Calu3 (cell line): ENCODE measurements at regions of chr6 and their contacts with region 1.

Region 1: DNA sequence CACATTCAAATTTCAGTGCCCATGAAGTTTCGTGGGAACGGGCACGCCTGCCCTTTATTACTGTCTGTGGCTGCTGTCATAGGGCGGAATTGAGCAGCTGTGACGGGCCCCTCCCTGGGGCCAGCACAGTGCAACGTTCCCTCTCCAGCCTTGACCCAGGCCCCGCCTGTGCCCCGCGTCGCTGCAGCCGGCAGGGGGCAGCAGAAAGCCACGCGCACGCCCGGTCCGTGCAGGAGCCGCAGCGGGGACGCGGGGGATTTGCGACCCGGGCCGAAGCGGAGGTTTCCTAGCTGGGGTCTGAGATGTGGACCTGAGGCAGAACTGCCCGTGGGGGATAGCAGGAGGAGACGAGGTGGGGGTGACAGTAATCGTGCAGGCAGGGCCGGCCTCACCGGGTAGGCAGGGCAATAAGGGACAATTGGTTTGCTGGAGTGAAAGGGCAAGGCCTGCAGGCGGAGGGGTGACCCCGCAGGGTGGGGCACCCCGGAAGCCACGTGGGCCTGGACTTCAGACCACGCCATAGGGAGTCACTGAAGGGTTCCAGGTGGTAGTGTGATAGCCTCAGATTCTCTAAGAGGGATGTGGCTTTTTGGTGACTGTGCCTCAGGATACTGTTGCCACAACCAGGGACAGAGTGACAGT is 54.4 kb downstream of the SYTL3 start:
- DNase-seq: peak; percentile 91
- H3K4me3 Mint-ChIP-seq: peak overlapping the region; percentile 69
- H3K27ac Mint-ChIP-seq: peak overlapping the region; percentile 80
- H3K4me1 Mint-ChIP-seq: peaks cover 49% of the 10 kb centered on the region
- H3K27me3 Mint-ChIP-seq: no peaks in the 10 kb centered on the region
- CTCF ChIP-seq: peak; percentile 97

Region 2: DNA sequence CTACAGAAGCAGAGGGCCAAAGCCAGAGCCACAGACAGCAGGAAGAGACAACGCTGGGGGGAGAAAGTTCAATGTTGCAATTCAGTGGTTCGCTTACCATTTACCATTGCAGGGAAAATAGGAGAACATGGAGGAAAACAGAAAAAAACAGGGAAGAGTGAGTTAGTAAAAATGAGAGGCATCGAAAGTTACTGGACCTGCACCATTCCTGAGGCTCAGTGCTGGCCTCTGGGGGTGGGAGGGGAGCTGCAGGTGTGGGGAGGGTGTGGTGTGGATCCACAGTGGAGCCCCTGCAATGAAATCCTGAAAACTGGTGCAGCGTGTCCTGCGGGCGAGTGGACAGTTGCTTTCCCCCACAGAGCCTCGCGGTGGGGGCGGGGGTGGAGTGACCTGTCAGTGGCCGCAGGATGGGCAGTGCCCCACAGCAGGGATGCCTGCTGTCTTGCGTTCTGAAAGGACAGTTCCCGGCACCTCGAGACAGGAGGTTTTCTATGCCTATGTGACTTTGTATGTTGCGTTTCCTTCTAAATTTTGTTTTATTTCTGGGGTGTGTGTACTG is 138.7 kb before region 1 on chr6:
- CTCF ChIA-PET with region 1: no interaction called
- intact Hi-C with region 1: no loop called
- DNase-seq: no peak
- H3K4me3 Mint-ChIP-seq: no peak overlapping the region
- H3K27ac Mint-ChIP-seq: no peak overlapping the region
- H3K4me1 Mint-ChIP-seq: peaks cover 34% of the 10 kb centered on the region
- H3K27me3 Mint-ChIP-seq: no peaks in the 10 kb centered on the region
- CTCF ChIP-seq: no peak

Region 3: DNA sequence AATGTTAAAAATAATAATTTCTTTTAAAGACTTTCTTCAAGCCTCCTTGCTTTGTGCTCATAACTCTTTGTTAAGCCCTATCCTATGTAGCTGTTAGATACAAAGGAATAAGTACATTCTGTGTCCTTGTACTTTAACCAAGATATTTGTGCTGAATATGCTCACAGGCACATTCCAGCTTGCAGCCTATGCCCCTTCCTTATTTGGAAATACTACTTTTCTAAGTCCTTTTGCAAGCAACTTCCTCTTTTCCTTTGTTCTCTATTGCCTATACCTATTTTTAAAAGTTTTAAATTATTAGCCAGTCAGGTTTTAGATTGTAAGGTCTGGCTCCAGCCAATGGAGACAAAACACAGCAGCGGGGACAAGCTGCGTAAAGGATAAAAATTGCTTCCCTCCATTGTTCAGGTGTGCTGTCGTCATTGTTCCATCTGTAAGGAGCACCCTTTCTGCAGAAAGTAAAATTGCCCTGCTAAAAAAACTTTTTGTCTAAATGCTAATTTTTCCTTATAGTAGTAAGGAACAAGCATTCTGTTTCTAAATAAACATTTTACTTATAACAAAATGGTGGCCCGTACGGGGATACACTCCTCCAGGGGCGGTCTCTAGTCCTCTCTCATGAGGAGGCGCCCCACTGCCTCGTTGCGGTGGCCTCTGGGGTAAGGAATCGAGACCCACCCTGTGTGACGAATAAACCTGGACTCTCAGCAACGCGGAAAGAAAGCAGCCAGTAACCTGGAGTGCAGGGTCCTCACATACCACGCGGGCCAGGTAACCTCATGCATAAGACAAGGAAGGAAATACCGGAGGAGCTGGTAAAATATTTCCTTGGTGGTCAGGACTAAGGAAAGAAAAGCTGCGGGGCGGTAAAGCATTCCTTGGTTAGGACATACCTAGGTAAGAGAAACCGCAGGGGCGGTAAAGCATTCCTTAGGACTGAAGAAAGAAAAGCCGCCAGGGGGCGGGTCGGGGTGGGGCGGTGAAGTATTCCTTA is 25.9 kb after region 1 on chr6:
- CTCF ChIA-PET with region 1: interaction called, 4 read pairs
- intact Hi-C with region 1: loop called (anchors 2 kb)
- DNase-seq: peak; percentile 95
- H3K4me3 Mint-ChIP-seq: peak overlapping the region; percentile 11
- H3K27ac Mint-ChIP-seq: peak overlapping the region; percentile 87
- H3K4me1 Mint-ChIP-seq: peaks cover 16% of the 10 kb centered on the region
- H3K27me3 Mint-ChIP-seq: no peaks in the 10 kb centered on the region
- CTCF ChIP-seq: no peak

Region 4: DNA sequence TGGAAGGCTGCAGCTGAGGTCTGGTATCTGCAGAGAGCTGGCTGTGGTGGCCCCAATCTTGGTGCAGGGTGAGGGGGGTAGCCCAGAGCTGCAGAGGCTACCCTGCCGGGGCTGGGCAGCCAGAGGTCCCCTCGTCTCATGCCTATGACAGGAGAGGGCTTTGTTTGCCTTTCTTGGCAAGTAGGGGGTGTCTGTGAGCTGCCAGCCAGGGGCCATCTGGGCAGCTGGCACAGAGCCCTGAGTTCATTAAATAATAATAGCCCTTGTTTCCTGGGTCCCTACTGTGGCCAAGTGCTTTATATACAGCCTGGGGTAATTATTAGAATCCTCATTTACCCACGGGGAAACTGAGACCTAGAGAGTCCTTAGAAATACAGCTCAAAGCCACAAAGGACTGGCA is 48.3 kb after region 1 on chr6:
- CTCF ChIA-PET with region 1: no interaction called
- intact Hi-C with region 1: loop called (anchors 5 kb)
- DNase-seq: peak; percentile 70
- H3K4me3 Mint-ChIP-seq: no peak overlapping the region
- H3K27ac Mint-ChIP-seq: peak overlapping the region; percentile 54
- H3K4me1 Mint-ChIP-seq: peaks cover 33% of the 10 kb centered on the region
- H3K27me3 Mint-ChIP-seq: no peaks in the 10 kb centered on the region
- CTCF ChIP-seq: peak; percentile 23

Region 5: DNA sequence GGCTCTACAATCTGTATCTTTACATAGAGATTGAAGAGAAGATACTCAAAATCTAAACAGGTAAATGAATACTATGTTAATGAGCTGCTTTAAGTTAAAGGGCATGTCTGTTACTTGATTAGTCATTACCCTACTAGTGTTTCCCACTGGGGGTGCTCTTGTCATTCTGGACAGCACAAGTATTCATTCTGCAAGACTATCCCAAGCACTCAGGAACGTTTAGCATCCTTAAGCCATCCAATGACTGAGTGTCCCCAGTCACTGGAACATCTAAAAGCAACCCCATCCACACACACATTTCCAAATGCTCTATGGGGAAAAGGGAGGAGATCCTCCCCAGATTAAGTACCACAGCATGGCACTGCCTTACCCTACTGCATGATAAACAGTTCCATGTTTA is 89.1 kb after region 1 on chr6:
- CTCF ChIA-PET with region 1: interaction called, 4 read pairs
- intact Hi-C with region 1: loop called (anchors 5 kb)
- DNase-seq: no peak
- H3K4me3 Mint-ChIP-seq: peak overlapping the region; percentile 50
- H3K27ac Mint-ChIP-seq: no peak overlapping the region
- H3K4me1 Mint-ChIP-seq: peaks cover 94% of the 10 kb centered on the region
- H3K27me3 Mint-ChIP-seq: no peaks in the 10 kb centered on the region
- CTCF ChIP-seq: peak; percentile 27

Region 6: GRCh38 chr6:159104163-159104925 is 400.0 kb after region 1 on chr6:
- CTCF ChIA-PET with region 1: no interaction called
- intact Hi-C with region 1: loop called (anchors 10 kb)
- DNase-seq: peak; percentile 75
- H3K4me3 Mint-ChIP-seq: no peak overlapping the region
- H3K27ac Mint-ChIP-seq: no peak overlapping the region
- H3K4me1 Mint-ChIP-seq: peaks cover 36% of the 10 kb centered on the region
- H3K27me3 Mint-ChIP-seq: peaks cover 34% of the 10 kb centered on the region
- CTCF ChIP-seq: peak; percentile 77

Region 7: DNA sequence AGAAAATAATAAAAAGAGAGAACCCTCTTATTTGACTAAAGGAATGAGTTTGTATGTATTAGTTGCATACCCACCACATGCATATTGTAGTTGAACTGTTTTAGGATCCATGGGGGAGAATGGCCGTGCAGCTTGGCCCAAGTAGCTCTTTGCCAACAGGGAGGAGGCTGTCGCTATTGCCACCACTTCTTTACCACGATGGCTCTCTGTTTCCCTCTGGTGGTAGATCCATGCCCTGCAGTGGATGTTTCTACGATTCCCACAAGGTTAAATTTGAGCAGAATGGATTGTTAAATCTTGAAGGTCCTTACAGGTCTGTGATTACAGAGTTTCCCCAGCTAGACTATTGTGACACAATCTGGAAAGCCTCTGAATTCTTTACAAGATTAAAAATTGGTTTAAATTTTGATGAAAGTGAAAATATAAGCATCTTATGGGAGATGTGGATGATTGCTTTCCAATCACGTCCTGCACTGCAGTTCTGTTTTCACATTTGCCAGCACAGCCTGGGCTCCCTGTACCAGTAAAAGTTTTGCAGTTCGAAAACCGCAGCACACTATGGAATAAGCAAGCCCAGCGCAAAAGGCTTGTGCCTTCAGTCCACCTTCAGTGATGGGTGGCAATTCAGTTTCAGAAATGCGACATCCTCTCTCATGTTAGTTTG is 430.5 kb after region 1 on chr6:
- CTCF ChIA-PET with region 1: interaction called, 3 read pairs
- intact Hi-C with region 1: loop called (anchors 5 kb)
- DNase-seq: peak; percentile 80
- H3K4me3 Mint-ChIP-seq: no peak overlapping the region
- H3K27ac Mint-ChIP-seq: no peak overlapping the region
- H3K4me1 Mint-ChIP-seq: peaks cover 12% of the 10 kb centered on the region
- H3K27me3 Mint-ChIP-seq: peaks cover 85% of the 10 kb centered on the region
- CTCF ChIP-seq: peak; percentile 69

Region 8: DNA sequence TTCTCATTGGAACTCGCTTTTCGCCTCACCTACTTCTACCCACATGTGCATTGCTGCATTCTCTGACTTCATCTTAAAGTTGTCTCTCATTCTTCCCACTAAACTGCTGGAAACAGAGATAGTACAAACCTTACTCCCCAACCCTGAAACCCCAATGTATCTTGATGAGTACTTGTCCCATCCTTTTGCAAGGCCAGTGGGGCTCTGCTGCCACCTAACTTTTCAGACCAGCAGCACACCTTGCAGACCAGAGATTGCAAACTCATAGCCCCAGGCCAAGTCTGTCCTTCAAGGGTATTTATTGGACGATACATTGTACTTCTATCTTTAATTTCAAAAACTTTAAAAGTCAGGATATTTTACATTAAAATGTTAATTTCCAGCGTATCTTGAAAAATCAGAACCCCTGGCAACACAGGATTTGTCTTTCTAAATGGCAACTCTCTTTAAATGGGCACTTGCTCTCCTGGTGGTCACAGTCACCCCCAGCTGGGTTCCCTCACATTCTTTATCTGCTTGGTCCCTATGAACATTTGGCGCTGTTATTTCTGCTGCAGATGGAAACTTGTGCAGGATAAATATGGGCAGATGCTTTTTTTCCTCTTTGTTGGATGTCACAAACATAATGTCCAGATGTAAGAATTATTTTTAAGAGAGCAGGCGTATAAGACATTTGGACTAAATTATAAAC is 904.8 kb after region 1 on chr6:
- CTCF ChIA-PET with region 1: no interaction called
- intact Hi-C with region 1: no loop called
- DNase-seq: peak; percentile 58
- H3K4me3 Mint-ChIP-seq: no peak overlapping the region
- H3K27ac Mint-ChIP-seq: no peak overlapping the region
- H3K4me1 Mint-ChIP-seq: no peaks in the 10 kb centered on the region
- H3K27me3 Mint-ChIP-seq: no peaks in the 10 kb centered on the region
- CTCF ChIP-seq: peak; percentile 67

Region 9: DNA sequence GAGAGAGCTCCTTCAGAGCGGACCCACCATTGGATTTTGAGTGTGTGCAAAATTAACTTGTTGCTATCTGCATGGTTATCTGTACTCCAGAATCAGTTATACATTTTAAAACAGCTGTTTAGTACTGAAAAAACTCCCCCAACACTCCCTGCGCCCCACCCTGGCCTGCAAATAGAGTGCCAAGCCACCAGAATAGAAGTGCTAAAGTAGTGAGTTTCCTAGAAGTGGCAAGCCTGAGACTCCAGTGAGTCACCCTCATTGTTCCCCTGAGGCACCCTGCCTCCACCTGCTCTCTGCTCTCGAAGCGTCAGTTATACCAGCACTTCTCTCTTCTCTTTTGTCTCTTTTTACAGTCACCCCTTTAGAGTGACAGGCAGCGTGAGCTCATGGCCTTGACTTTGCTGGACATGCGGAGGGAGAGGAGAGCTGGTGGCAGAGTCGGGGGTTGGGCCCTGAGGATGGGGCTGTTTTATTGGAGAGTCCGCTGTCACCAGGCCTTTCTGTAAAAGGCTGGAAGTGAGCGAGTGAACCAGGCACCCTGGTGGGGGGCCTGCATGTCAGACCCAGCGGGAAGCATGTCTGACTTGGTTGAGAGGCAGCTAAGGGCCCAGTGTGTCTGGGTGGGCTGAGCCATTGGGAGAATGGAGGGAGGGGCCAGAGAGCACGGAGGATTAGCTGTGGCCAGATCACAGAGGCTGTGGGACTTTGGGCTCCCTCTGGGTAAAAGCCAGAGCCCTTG is 1275.0 kb after region 1 on chr6:
- CTCF ChIA-PET with region 1: no interaction called
- intact Hi-C with region 1: no loop called
- DNase-seq: peak; percentile 60
- H3K4me3 Mint-ChIP-seq: peak overlapping the region; percentile 37
- H3K27ac Mint-ChIP-seq: peak overlapping the region; percentile 74
- H3K4me1 Mint-ChIP-seq: peaks cover 83% of the 10 kb centered on the region
- H3K27me3 Mint-ChIP-seq: no peaks in the 10 kb centered on the region
- CTCF ChIP-seq: no peak